CD14-positive monocyte (primary cell): ENCODE measurements at regions of chr5 and their contacts with region 1.

Region 1: DNA sequence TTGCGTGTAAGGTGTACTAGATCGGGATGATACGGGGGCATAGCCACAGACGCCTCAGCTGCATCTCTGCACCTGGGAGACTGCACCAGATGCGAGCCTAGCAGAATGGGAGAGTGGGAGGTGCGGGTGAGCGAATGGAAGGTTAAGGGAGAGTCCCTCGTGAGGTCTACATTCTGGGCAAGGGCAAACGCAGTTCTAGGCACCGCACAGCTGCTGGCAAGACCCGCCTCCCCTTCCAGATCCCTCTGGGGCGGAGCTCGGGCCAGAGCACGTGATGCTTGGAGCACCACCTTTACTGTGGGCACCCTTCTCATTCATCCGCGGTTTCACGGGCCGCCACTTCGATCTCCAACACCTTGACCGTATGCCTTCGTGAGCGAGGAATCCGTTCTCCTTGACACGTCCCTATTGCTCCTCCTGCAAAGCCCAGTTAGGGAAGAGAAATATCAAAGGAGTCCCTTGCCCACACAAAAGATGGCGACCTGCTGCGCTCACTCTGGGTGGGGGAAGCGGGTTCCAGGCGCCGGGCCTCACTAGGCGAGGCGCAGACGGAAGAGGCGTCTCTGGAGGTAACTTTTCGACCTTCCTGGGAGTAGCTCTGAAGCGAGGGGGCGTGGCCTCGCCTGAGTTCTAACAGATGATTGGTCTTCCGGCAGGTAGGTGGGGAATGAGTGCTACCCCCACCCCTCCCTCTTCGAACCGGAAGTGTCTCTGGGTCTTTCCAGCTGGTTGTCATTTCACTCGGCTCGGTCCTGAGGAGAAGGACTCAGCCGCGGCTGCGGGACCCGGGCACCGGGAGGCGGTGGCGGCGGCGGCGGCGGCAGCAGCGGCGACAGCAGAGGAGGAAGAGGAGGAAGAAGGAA is at the start of gene CPEB4:
- DNase-seq: peak; percentile 100
- H3K4me3 ChIP-seq: peak within 1 kb of the TSS; percentile 70 to 97 (median 97)
- H3K4me3 Mint-ChIP-seq: peak within 1 kb of the TSS; percentile 97 to 100
- H3K27ac ChIP-seq: peak within 1 kb of the TSS; percentile 83 to 93
- H3K27ac Mint-ChIP-seq: peak within 1 kb of the TSS; percentile 96 to 100 (median 99)
- H3K4me1 ChIP-seq: peaks cover 51 to 84% of the 10 kb centered on the region in 2 donors
- H3K4me1 Mint-ChIP-seq: peaks cover 69% of the 10 kb centered on the region
- H3K27me3 ChIP-seq: no peaks in the 10 kb centered on the region
- H3K27me3 Mint-ChIP-seq: no peaks in the 10 kb centered on the region
- CTCF ChIP-seq: no peak
- polyA plus RNA-seq, gene CPEB4: 10.7 to 27.3 (median 13.9) TPM

Region 2: GRCh38 chr5:173802670-173803165 is 85.1 kb before region 1 on chr5:
- intact Hi-C with region 1: loop called in 1 of 2 experiments (anchors 10 kb)
- DNase-seq: peak; percentile 89 to 97 (median 93)
- H3K4me3 ChIP-seq: peak overlapping the region in 1 of 3 experiments; percentile 54
- H3K4me3 Mint-ChIP-seq: peak overlapping the region in 1 of 2 donors; percentile 35
- H3K27ac ChIP-seq: peak overlapping the region; percentile 54 to 78
- H3K27ac Mint-ChIP-seq: peak overlapping the region; percentile 79 to 91 (median 84)
- H3K4me1 ChIP-seq: peaks cover 43% of the 10 kb centered on the region in 2 donors
- H3K4me1 Mint-ChIP-seq: peaks cover 31% of the 10 kb centered on the region
- H3K27me3 ChIP-seq: no peaks in the 10 kb centered on the region
- H3K27me3 Mint-ChIP-seq: peaks cover 0 to 2% (median 2%) of the 10 kb centered on the region in 3 donors
- CTCF ChIP-seq: no peak

Region 3: DNA sequence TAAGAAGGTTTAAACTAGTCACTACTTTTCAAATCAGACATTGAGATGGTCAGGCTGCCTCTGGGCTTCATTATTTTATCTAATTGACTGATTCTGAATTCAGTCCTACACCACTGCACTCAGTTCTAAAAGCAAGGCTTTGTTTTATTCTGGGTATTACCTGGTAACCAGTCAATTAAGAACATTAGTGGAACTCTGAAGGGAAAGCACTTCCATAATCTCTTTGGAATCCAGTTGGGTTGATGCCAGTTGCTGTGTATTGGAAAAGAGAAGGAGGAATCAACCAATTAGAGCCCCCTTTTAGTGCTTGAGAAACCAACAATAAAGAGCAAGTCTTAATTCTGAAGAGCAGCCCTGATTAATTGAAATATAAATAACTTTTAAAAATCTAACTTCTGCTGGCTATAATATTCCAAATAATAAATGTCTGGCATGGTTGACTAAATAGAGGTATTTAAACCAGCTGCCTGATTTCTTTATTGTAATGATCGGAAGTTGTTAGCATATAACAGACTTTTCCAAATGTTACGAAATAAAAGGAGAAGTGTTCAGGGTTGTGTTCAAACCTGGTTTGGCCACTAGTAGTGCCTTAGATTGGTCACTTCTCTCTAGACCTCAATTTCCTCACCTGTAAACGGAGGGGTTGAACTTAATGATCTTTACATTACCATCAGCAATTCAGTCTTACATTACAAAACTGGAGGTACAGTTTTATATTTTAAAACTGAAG is 32.3 kb after region 1 on chr5:
- intact Hi-C with region 1: loop called in 1 of 2 experiments (anchors 5 kb)
- DNase-seq: peak; percentile 35 to 81 (median 66)
- H3K4me3 ChIP-seq: peak overlapping the region in 1 of 3 experiments; percentile 61
- H3K4me3 Mint-ChIP-seq: no peak overlapping the region
- H3K27ac ChIP-seq: peak overlapping the region in 1 of 2 donors; percentile 77
- H3K27ac Mint-ChIP-seq: peak overlapping the region in 1 of 7 donors; percentile 96
- H3K4me1 ChIP-seq: peaks cover 64 to 73% of the 10 kb centered on the region in 2 donors
- H3K4me1 Mint-ChIP-seq: peaks cover 26% of the 10 kb centered on the region
- H3K27me3 ChIP-seq: no peaks in the 10 kb centered on the region
- H3K27me3 Mint-ChIP-seq: peaks cover 0 to 1% (median 0%) of the 10 kb centered on the region in 3 donors
- CTCF ChIP-seq: peak; percentile 33